B cell (primary cell): ENCODE measurements at regions of chr22 and their contacts with region 1.

Region 1: GRCh38 chr22:19479357-19480172 is at the start of gene CDC45:
- DNase-seq: peak; percentile 98
- ATAC-seq: peak; percentile 90
- H3K4me3 ChIP-seq: peak within 1 kb of the TSS; percentile 66 to 92 (median 83)
- H3K4me3 Mint-ChIP-seq: peak within 1 kb of the TSS; percentile 98
- H3K27ac ChIP-seq: peak within 1 kb of the TSS; percentile 98 to 100
- H3K27ac Mint-ChIP-seq: peak within 1 kb of the TSS; percentile 100
- H3K4me1 ChIP-seq: peaks cover 16 to 20% of the 10 kb centered on the region in 2 donors
- H3K4me1 Mint-ChIP-seq: peaks cover 23% of the 10 kb centered on the region
- H3K27me3 ChIP-seq: no peaks in the 10 kb centered on the region
- H3K27me3 Mint-ChIP-seq: no peaks in the 10 kb centered on the region
- CTCF ChIP-seq: no peak
- total RNA-seq, gene CDC45: 0.49 and 0.56 TPM in 2 replicates

Region 2: GRCh38 chr22:19143967-19144400 is 335.6 kb before region 1 on chr22:
- CTCF ChIA-PET with region 1: interaction called, 17 read pairs
- POLR2A ChIA-PET with region 1: interaction called, 4 read pairs
- intact Hi-C with region 1: loop called (anchors 1 kb)
- DNase-seq: no peak
- ATAC-seq: no peak
- H3K4me3 ChIP-seq: peak overlapping the region; percentile 78 to 96 (median 87)
- H3K4me3 Mint-ChIP-seq: peak overlapping the region; percentile 99
- H3K27ac ChIP-seq: peak overlapping the region; percentile 85 to 94
- H3K27ac Mint-ChIP-seq: peak overlapping the region; percentile 97
- H3K4me1 ChIP-seq: peaks cover 9 to 17% of the 10 kb centered on the region in 2 donors
- H3K4me1 Mint-ChIP-seq: peaks cover 16% of the 10 kb centered on the region
- H3K27me3 ChIP-seq: peaks cover 0 to 17% (median 8%) of the 10 kb centered on the region in 4 experiments
- H3K27me3 Mint-ChIP-seq: peaks cover 9% of the 10 kb centered on the region
- CTCF ChIP-seq: no peak

Region 3: GRCh38 chr22:19218541-19219233 is 260.9 kb before region 1 on chr22:
- CTCF ChIA-PET with region 1: interaction called, 5 read pairs
- POLR2A ChIA-PET with region 1: no interaction called
- intact Hi-C with region 1: loop called (anchors 1 kb)
- DNase-seq: no peak
- ATAC-seq: no peak
- H3K4me3 ChIP-seq: no peak overlapping the region
- H3K4me3 Mint-ChIP-seq: no peak overlapping the region
- H3K27ac ChIP-seq: no peak overlapping the region
- H3K27ac Mint-ChIP-seq: no peak overlapping the region
- H3K4me1 ChIP-seq: peaks cover 0 to 4% of the 10 kb centered on the region in 2 donors
- H3K4me1 Mint-ChIP-seq: peaks cover 5% of the 10 kb centered on the region
- H3K27me3 ChIP-seq: no peaks in the 10 kb centered on the region
- H3K27me3 Mint-ChIP-seq: no peaks in the 10 kb centered on the region
- CTCF ChIP-seq: no peak

Region 4: GRCh38 chr22:19361501-19362103 is 118.0 kb before region 1 on chr22:
- CTCF ChIA-PET with region 1: no interaction called
- POLR2A ChIA-PET with region 1: no interaction called
- intact Hi-C with region 1: loop called (anchors 1 kb)
- DNase-seq: peak; percentile 92
- ATAC-seq: peak; percentile 95
- H3K4me3 ChIP-seq: peak overlapping the region; percentile 1 to 65 (median 47)
- H3K4me3 Mint-ChIP-seq: peak overlapping the region; percentile 85
- H3K27ac ChIP-seq: peak overlapping the region; percentile 98 to 100
- H3K27ac Mint-ChIP-seq: peak overlapping the region; percentile 95
- H3K4me1 ChIP-seq: peaks cover 64 to 75% of the 10 kb centered on the region in 2 donors
- H3K4me1 Mint-ChIP-seq: peaks cover 69% of the 10 kb centered on the region
- H3K27me3 ChIP-seq: no peaks in the 10 kb centered on the region
- H3K27me3 Mint-ChIP-seq: no peaks in the 10 kb centered on the region
- CTCF ChIP-seq: no peak

Region 5: DNA sequence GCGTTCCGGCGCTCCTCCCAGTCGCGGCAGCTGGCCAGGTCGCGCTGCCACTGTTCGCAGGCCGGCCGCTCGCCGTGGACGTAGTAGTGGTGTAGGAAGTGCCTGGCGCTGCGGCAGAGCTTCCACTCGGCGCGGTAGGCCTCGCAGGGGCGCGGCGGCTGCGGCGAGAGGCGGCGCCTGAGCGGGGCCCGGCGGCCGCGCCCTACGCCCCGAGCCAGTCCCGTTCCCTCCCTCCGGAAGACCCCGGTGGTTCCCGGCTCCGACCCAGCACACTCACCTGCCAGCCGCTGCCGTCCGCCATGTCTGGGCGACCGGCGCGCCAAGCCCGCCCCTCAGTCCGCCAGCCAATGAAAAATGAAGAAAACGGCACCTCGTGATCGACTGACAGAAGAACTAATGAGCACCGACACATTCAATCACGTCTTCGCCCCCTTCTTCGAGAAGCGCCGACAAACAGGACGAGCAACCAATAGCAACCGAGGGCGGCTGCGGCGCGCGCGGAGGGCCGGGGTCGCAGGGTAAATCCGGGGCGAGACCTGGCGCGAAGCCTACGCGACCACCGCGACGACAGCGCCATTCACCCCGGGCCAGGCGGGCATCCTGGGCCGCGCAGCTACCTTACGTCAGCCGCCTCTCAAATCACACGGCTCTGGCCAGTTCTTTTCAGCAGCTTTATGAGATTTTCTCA is 32.0 kb before region 1 on chr22 and contains the start of gene C22orf39:
- CTCF ChIA-PET with region 1: interaction called, 3 read pairs
- POLR2A ChIA-PET with region 1: interaction called, 3 read pairs
- intact Hi-C with region 1: loop called (anchors 1 kb)
- DNase-seq: peak; percentile 94
- ATAC-seq: peak; percentile 87
- H3K4me3 ChIP-seq: peak within 1 kb of the TSS; percentile 65 to 82 (median 80)
- H3K4me3 Mint-ChIP-seq: peak within 1 kb of the TSS; percentile 99
- H3K27ac ChIP-seq: peak within 1 kb of the TSS; percentile 92 to 96
- H3K27ac Mint-ChIP-seq: peak within 1 kb of the TSS; percentile 98
- H3K4me1 ChIP-seq: peaks cover 16 to 27% of the 10 kb centered on the region in 2 donors
- H3K4me1 Mint-ChIP-seq: peaks cover 39% of the 10 kb centered on the region
- H3K27me3 ChIP-seq: no peaks in the 10 kb centered on the region
- H3K27me3 Mint-ChIP-seq: no peaks in the 10 kb centered on the region
- CTCF ChIP-seq: no peak
- total RNA-seq, gene C22orf39: 47.2 and 55.1 TPM in 2 replicates

Region 6: DNA sequence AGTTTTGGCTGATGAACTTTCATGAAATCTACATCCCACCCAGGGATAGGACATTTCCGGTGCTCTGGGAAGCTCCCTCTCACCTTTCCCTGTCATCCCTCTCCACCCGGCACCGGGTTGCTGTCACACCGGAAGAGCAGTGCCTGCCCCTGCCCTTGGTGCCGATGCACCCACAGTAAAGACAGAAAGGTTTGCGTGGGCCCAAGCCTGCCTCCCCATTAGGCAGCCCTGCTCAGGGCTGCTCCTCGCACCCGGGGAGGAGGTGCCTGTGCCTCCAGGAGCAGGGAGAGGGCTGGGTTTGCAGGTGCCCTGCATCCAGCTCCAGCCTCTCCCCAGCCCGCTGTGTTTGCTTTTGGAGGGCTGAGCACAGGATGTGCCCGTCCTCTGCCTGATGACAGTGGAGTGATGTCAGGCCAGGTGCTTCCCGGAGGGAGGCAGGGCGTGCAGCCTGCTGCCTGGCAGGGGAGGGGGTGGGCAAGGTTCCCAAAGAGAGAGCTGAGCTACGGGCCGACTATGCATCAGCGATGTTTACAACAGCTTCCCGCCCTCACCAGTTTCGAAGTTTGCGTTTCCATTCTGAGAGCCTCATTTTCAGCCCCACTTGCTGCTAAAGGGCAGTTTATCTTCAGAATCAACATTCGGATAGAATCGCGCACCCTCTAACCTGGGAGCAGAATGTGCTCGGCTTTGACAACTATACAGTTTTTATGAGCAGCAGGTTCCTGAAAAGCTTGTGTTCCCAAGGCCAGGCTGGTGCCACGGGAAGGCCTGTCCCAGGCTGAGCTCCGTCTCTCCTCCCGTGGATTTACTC is 127.8 kb after region 1 on chr22:
- CTCF ChIA-PET with region 1: no interaction called
- POLR2A ChIA-PET with region 1: no interaction called
- intact Hi-C with region 1: no loop called
- DNase-seq: no peak
- ATAC-seq: no peak
- H3K4me3 ChIP-seq: no peak overlapping the region
- H3K4me3 Mint-ChIP-seq: no peak overlapping the region
- H3K27ac ChIP-seq: no peak overlapping the region
- H3K27ac Mint-ChIP-seq: peak overlapping the region; percentile 26
- H3K4me1 ChIP-seq: peaks cover 0 to 8% of the 10 kb centered on the region in 2 donors
- H3K4me1 Mint-ChIP-seq: peaks cover 4% of the 10 kb centered on the region
- H3K27me3 ChIP-seq: peaks cover 0 to 18% (median 9%) of the 10 kb centered on the region in 4 experiments
- H3K27me3 Mint-ChIP-seq: peaks cover 30% of the 10 kb centered on the region
- CTCF ChIP-seq: no peak

Region 7: DNA sequence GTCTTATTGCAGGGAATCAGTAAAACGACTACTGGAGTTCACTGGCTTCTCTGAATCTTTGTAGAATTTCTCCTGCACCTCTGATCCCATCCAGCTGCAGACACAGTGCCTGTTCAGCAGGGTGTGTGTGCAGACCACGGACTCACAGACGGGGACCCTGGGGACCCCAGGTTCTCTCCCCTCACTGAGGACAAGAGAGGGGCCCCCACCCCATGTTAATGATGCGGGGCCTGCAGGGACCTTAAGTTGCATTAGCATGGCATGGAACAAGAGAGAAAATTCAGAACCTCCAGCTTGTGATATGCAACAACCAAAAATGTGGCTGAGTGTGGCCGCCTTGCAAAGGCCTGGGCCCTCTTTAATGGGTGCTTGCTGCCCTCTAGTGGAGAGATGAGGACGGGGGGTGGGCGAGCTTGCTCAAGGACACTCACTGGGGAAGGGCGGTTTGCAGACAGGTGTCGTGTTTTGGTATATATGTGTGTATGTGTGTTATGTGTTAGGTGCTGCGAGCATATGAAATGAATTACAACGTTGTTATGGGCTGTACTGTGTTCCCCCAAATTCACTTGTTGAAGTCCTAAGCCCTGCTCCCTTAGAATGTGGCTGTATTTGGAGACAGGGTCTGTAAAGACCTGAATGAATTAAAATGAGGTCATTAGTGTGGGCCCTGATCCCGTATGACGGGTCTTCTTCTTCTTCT is 150.3 kb after region 1 on chr22:
- CTCF ChIA-PET with region 1: interaction called, 29 read pairs
- POLR2A ChIA-PET with region 1: no interaction called
- intact Hi-C with region 1: loop called (anchors 1 kb)
- DNase-seq: peak; percentile 86
- ATAC-seq: peak; percentile 95
- H3K4me3 ChIP-seq: no peak overlapping the region
- H3K4me3 Mint-ChIP-seq: no peak overlapping the region
- H3K27ac ChIP-seq: no peak overlapping the region
- H3K27ac Mint-ChIP-seq: no peak overlapping the region
- H3K4me1 ChIP-seq: no peaks in the 10 kb centered on the region
- H3K4me1 Mint-ChIP-seq: no peaks in the 10 kb centered on the region
- H3K27me3 ChIP-seq: peaks cover 0 to 24% (median 4%) of the 10 kb centered on the region in 4 experiments
- H3K27me3 Mint-ChIP-seq: peaks cover 40% of the 10 kb centered on the region
- CTCF ChIP-seq: peak; percentile 96